ENCODE measurements at regions of chr3 and their contacts with region 1.

Region 1: GRCh38 chr3:4866841-4867240 is 112.4 kb upstream of the BHLHE40 start:
- DNase-seq: no peak
- ATAC-seq: peak; percentile 8; the same call in 1 of the 2 replicates
- H3K4me3 ChIP-seq: peak overlapping the region; percentile 45 to 63
- H3K27ac ChIP-seq: peak overlapping the region; percentile 96
- H3K4me1 ChIP-seq: peaks cover 8% of the 10 kb centered on the region
- H3K27me3 ChIP-seq: no peaks in the 10 kb centered on the region
- CTCF ChIP-seq: no peak

Region 2: GRCh38 chr3:3998140-3998922 is 868.5 kb before region 1 on chr3:
- CTCF ChIA-PET with region 1: no interaction called
- POLR2A ChIA-PET with region 1: no interaction called
- in situ Hi-C with region 1: no loop called
- intact Hi-C with region 1: no loop called
- DNase-seq: peak; percentile 36
- ATAC-seq: no peak
- H3K4me3 ChIP-seq: no peak overlapping the region
- H3K27ac ChIP-seq: no peak overlapping the region
- H3K4me1 ChIP-seq: no peaks in the 10 kb centered on the region
- H3K27me3 ChIP-seq: no peaks in the 10 kb centered on the region
- CTCF ChIP-seq: peak; percentile 58

Region 3: DNA sequence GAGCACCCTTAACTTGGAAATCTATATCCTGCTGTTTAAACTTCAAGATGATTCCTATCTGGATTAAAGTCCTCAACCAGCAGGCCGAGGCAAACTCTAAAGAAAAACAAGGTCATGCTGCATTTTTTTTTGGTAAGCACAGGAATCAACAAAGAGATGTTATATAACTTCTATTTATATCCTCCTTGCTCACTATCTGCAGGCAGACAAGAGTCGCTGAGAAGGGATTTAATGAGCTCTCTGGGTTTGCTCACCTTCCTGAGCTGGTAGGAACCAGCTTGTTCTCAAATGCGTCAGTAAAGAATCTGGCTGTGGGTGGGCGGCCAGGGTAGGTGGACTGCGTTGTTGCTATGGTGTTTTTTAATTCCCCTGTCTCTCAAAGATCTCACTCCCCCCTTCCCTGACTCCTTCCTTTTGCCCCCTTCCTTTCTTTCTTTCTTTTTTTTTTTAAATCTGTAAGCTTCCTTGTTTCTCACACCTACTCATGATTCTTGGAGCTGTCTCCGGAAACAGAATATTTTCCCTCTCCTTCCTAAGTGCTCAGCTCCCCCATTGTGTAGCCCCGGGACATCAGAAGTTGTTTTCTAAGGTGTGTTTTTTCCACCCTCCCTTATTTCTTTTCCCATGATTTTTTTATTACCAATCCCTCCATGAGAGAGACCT is 116.4 kb before region 1 on chr3:
- CTCF ChIA-PET with region 1: no interaction called
- POLR2A ChIA-PET with region 1: interaction called, 15 read pairs
- in situ Hi-C with region 1: no loop called
- intact Hi-C with region 1: no loop called
- DNase-seq: no peak
- ATAC-seq: no peak
- H3K4me3 ChIP-seq: no peak overlapping the region
- H3K27ac ChIP-seq: peak overlapping the region; percentile 29; the same call in 1 of the 2 replicates
- H3K4me1 ChIP-seq: peaks cover 6% of the 10 kb centered on the region; the same call in 1 of the 2 replicates
- H3K27me3 ChIP-seq: no peaks in the 10 kb centered on the region
- CTCF ChIP-seq: no peak

Region 4: DNA sequence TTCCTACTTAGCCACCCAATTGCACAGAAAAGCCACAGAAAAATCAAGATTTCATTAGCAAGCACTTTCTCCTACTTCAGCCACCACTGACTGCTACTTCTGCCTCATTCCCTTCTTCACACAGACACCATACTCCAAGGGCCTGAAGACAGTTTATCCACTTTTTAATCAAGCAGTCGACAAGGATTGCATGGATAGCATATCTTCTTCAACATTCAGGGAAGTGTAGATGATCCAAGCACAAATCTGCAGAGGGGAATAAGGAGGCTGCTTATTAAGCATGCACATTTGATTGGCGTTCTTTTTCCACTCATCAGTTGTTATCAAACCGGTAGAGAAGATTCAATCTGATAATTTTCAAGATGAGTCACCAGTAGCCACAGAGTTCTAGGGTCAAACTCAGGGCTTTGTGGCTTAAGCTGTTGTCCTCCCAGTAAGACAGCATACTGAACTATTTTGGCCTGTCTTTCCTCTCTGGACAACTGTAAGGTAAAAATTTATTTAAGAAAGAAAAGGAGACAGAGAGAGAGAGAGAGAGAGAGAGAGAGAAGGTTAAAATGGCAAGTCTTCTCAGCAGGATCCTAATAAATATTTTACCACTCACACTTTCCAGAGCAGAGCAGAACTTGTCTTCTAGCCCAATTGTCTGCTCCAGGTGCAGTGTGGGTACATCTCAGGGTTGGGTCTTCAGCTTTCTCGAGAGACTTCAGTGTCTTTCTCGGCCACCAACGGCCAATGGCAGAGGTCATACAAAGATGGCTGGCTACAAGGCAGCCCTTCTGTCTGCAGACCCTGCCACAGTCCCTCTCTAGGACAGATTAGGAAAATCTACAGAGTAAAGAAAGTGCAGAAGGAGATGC is 31.8 kb after region 1 on chr3:
- CTCF ChIA-PET with region 1: interaction called, 10 read pairs
- POLR2A ChIA-PET with region 1: no interaction called
- in situ Hi-C with region 1: no loop called
- intact Hi-C with region 1: no loop called
- DNase-seq: no peak
- ATAC-seq: no peak
- H3K4me3 ChIP-seq: no peak overlapping the region
- H3K27ac ChIP-seq: no peak overlapping the region
- H3K4me1 ChIP-seq: peaks cover 6% of the 10 kb centered on the region; the same call in 1 of the 2 replicates
- H3K27me3 ChIP-seq: no peaks in the 10 kb centered on the region
- CTCF ChIP-seq: no peak

Region 5: DNA sequence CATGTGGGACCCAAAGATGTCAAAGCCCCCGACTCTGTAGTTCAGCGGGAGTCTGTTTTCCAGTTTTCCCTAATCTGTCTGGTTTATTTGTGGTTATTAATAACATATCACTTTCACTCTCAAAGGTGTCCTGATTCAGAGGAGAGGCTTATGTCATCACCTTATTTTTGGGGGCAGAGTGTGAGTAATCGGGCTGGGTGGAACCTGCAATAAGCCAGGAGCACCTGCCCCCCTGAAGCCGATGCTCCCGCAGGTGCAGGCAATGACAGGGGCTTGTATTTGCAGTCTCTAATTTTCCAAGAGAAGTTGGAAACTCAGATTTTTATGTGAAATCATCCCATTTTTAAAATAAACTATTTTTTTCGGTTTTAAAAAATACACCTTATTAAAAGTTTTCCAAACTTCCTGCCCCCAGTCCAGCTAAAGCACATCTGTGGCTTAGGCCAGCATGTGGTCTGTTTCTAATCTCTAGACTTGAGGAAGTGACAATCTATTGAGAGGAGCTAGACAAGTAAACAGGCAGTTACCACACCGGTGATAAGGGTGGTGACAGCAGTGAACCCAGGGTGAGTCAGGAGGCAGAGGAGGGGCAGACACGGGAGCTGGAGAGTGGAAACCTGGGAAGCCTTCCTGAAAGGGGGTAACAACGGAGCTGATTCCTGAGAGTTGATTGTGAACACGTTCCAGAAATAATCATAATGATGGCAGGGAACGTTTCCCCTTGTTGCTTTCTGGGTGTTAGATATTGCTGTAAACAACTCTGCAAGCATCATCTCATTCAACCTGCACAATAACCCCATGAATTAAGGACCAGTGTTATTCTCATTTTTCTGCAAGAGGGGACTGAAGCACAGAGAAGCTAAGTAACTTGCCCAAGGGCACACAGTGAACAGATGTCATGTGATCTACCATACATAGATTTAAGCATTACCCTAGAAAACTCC is 149.6 kb after region 1 on chr3:
- CTCF ChIA-PET with region 1: no interaction called
- POLR2A ChIA-PET with region 1: no interaction called
- in situ Hi-C with region 1: no loop called
- intact Hi-C with region 1: no loop called
- DNase-seq: no peak
- ATAC-seq: peak; percentile 83
- H3K4me3 ChIP-seq: no peak overlapping the region
- H3K27ac ChIP-seq: peak overlapping the region; percentile 83
- H3K4me1 ChIP-seq: peaks cover 36% of the 10 kb centered on the region
- H3K27me3 ChIP-seq: no peaks in the 10 kb centered on the region
- CTCF ChIP-seq: no peak

Measured in Panc1 (cell line).